ENCODE measurements at regions of chrX and their contacts with region 1.

Region 1: GRCh38 chrX:136588041-136588788 is 56.2 kb downstream of the VGLL1 start:
- DNase-seq: no peak
- H3K4me3 Mint-ChIP-seq: peak overlapping the region; percentile 57
- H3K27ac Mint-ChIP-seq: peak overlapping the region; percentile 97
- H3K4me1 Mint-ChIP-seq: peaks cover 66% of the 10 kb centered on the region
- H3K27me3 Mint-ChIP-seq: no peaks in the 10 kb centered on the region

Region 2: GRCh38 chrX:136251041-136251991 is 336.9 kb before region 1 on chrX and contains the start of gene MAP7D3:
- CTCF ChIA-PET with region 1: no interaction called
- POLR2A ChIA-PET with region 1: no interaction called
- DNase-seq: peak; percentile 68
- H3K4me3 Mint-ChIP-seq: peak within 1 kb of the TSS; percentile 79
- H3K27ac Mint-ChIP-seq: peak within 1 kb of the TSS; percentile 61
- H3K4me1 Mint-ChIP-seq: peaks cover 18% of the 10 kb centered on the region
- H3K27me3 Mint-ChIP-seq: no peaks in the 10 kb centered on the region
- total RNA-seq, gene MAP7D3: 14.5 to 14.8 TPM

Region 3: GRCh38 chrX:136468391-136469103 is 119.7 kb before region 1 on chrX:
- CTCF ChIA-PET with region 1: no interaction called
- POLR2A ChIA-PET with region 1: no interaction called
- DNase-seq: no peak
- H3K4me3 Mint-ChIP-seq: no peak overlapping the region
- H3K27ac Mint-ChIP-seq: no peak overlapping the region
- H3K4me1 Mint-ChIP-seq: peaks cover under 1% of the 10 kb centered on the region
- H3K27me3 Mint-ChIP-seq: no peaks in the 10 kb centered on the region

Region 4: DNA sequence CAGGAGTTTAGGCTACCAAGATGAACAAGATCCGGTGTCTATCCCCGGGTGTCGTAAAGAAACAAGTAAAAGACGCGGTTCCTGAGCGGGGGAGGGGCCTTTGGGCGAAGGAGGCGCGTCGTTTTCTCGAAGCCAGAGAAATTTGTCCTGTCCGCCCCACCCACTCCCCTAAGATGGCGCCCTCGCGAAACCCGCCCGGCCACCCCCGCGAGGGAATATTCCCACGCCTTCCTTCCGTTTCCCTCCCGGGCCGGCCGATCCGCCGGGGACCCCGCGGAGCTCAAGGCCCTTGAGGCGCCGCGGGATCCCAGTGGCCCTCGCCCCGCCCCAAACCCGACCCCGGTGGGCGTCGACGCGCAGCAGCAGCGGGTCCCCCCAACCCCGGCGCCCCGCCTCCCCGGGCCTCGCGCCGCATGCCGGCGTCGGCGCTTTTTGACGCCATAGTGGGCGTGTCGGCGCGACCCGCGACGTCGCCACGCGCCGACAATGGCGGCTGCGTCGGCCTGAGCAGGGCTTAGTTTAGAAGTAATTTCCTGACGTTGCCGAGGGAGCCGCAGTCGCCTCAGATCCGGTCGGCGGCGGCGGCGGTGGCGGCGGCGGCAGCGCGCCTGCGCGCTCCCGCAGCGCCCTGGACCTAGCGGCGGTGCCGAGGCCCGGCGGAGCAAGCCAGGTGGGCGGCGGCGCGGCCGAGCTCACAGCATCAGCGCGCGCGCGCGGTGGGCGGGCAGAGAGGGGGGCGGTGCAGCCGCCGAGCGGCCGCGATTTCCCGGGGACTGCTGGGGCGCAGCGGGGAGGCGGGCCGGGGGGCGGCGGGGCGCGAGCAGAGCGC is 91.2 kb before region 1 on chrX and contains the start of gene HTATSF1:
- CTCF ChIA-PET with region 1: no interaction called
- POLR2A ChIA-PET with region 1: interaction called, 11 read pairs
- DNase-seq: peak; percentile 90
- H3K4me3 Mint-ChIP-seq: peak within 1 kb of the TSS; percentile 88
- H3K27ac Mint-ChIP-seq: peak within 1 kb of the TSS; percentile 97
- H3K4me1 Mint-ChIP-seq: peaks cover 36% of the 10 kb centered on the region
- H3K27me3 Mint-ChIP-seq: peaks cover 8% of the 10 kb centered on the region
- total RNA-seq, gene HTATSF1: 63.7 to 64.1 TPM

Measured in activated CD4-positive, alpha-beta memory T cell treated with anti-CD3 and anti-CD28 coated beads, Interleukin-2, amount 10 ng/mL, durations not matched to agents 7 days and 5 days (primary cell).